ENCODE measurements at regions of chr6 and their contacts with region 1.

Region 1: GRCh38 chr6:28136585-28137504 is 4.8 kb upstream of the ZKSCAN8 start:
- DNase-seq: peak; percentile 45 to 72 (median 56)
- ATAC-seq: peak; percentile 56
- H3K4me3 ChIP-seq: peak overlapping the region; percentile 89
- H3K4me3 Mint-ChIP-seq: peak overlapping the region; percentile 91 to 100 (median 94)
- H3K27ac ChIP-seq: peak overlapping the region; percentile 98
- H3K27ac Mint-ChIP-seq: peak overlapping the region; percentile 91 to 100 (median 97)
- H3K4me1 ChIP-seq: peaks cover 10 to 19% of the 10 kb centered on the region in 2 donors
- H3K4me1 Mint-ChIP-seq: peaks cover 31 to 78% (median 72%) of the 10 kb centered on the region in 7 donors
- H3K27me3 ChIP-seq: no peaks in the 10 kb centered on the region
- H3K27me3 Mint-ChIP-seq: no peaks in the 10 kb centered on the region

Region 2: GRCh38 chr6:27902335-27903314 is 234.2 kb before region 1 on chr6:
- CTCF ChIA-PET with region 1: no interaction called
- POLR2A ChIA-PET with region 1: no interaction called
- intact Hi-C with region 1: loop called (anchors 5 kb)
- DNase-seq: peak; percentile 75 to 94 (median 90)
- ATAC-seq: peak; percentile 92
- H3K4me3 ChIP-seq: peak overlapping the region; percentile 95
- H3K4me3 Mint-ChIP-seq: peak overlapping the region; percentile 75 to 97 (median 91)
- H3K27ac ChIP-seq: peak overlapping the region; percentile 82
- H3K27ac Mint-ChIP-seq: peak overlapping the region; percentile 95 to 99 (median 99)
- H3K4me1 ChIP-seq: peaks cover 0 to 3% of the 10 kb centered on the region in 2 donors
- H3K4me1 Mint-ChIP-seq: peaks cover 0 to 26% (median 15%) of the 10 kb centered on the region in 7 donors
- H3K27me3 ChIP-seq: no peaks in the 10 kb centered on the region
- H3K27me3 Mint-ChIP-seq: peaks cover 4 to 35% (median 13%) of the 10 kb centered on the region in 5 donors

Region 3: GRCh38 chr6:28152531-28152930 is 15.7 kb after region 1 on chr6:
- CTCF ChIA-PET with region 1: interaction called, 4 read pairs
- POLR2A ChIA-PET with region 1: interaction called, 10 read pairs
- intact Hi-C with region 1: no loop called
- DNase-seq: no peak
- ATAC-seq: no peak
- H3K4me3 ChIP-seq: no peak overlapping the region
- H3K4me3 Mint-ChIP-seq: no peak overlapping the region
- H3K27ac ChIP-seq: no peak overlapping the region
- H3K27ac Mint-ChIP-seq: no peak overlapping the region
- H3K4me1 ChIP-seq: no peaks in the 10 kb centered on the region
- H3K4me1 Mint-ChIP-seq: peaks cover 2 to 7% (median 5%) of the 10 kb centered on the region in 7 donors
- H3K27me3 ChIP-seq: no peaks in the 10 kb centered on the region
- H3K27me3 Mint-ChIP-seq: no peaks in the 10 kb centered on the region

Region 4: DNA sequence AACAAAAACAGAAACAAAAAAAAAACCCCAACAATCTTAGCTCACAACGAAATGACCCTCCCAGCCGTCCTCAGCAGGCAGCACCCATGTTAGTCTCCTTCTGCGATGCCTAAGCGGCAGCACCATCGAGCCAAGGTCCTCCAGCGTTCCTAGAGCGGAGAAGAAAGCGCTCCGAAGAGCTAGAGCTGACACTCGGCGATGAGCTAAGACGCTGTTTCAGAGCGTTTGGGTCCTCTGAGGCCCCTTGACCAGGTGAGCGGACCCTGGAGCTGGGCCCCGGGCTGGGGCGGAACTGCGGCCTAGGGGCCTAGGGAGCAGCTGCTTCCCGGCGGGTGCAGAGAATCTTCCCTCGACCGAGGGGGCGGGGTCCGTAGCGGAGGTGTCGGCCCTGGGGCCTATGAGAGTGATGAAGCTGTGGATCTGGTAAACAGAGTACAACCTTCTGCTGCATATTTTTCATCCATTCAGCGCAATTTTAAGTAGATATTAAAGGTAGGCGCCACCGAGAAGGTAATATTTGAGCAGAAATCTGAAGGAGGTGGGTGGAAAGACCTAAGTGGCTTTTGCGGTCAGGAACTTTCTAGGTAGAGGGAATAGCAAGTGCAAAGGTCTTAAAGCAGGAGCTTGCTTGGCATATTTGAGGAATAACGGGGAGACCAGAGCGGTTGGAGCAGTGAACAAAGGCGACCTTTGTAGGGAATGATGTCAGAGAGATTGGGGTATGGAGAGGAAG is 130.3 kb after region 1 on chr6 and contains the start of gene ZSCAN26:
- CTCF ChIA-PET with region 1: interaction called, 4 read pairs
- POLR2A ChIA-PET with region 1: interaction called, 22 read pairs
- intact Hi-C with region 1: loop called (anchors 1 to 2 kb)
- DNase-seq: peak; percentile 67 to 91 (median 87)
- ATAC-seq: peak; percentile 96
- H3K4me3 ChIP-seq: peak within 1 kb of the TSS; percentile 96
- H3K4me3 Mint-ChIP-seq: peak within 1 kb of the TSS in 1 of 10 donors; percentile 30
- H3K27ac ChIP-seq: peak within 1 kb of the TSS; percentile 91
- H3K27ac Mint-ChIP-seq: peak within 1 kb of the TSS in 1 of 9 donors; percentile 48
- H3K4me1 ChIP-seq: peaks cover 0 to 24% of the 10 kb centered on the region in 2 donors
- H3K4me1 Mint-ChIP-seq: peaks cover 6 to 37% (median 24%) of the 10 kb centered on the region in 7 donors
- H3K27me3 ChIP-seq: no peaks in the 10 kb centered on the region
- H3K27me3 Mint-ChIP-seq: peaks cover 0 to 7% (median 0%) of the 10 kb centered on the region in 5 donors
- total RNA-seq, gene ZSCAN26: 8.0 to 27.8 (median 12.5) TPM

Region 5: GRCh38 chr6:28355743-28356665 is 219.2 kb after region 1 on chr6:
- CTCF ChIA-PET with region 1: interaction called, 5 read pairs
- POLR2A ChIA-PET with region 1: interaction called, 7 read pairs
- intact Hi-C with region 1: loop called (anchors 1 kb)
- DNase-seq: peak; percentile 26 to 69 (median 54)
- ATAC-seq: peak; percentile 92
- H3K4me3 ChIP-seq: peak overlapping the region; percentile 69
- H3K4me3 Mint-ChIP-seq: peak overlapping the region; percentile 78 to 96 (median 92)
- H3K27ac ChIP-seq: no peak overlapping the region
- H3K27ac Mint-ChIP-seq: peak overlapping the region; percentile 21 to 89 (median 62)
- H3K4me1 ChIP-seq: peaks cover 0 to 7% of the 10 kb centered on the region in 2 donors
- H3K4me1 Mint-ChIP-seq: peaks cover 16 to 38% (median 34%) of the 10 kb centered on the region in 7 donors
- H3K27me3 ChIP-seq: no peaks in the 10 kb centered on the region
- H3K27me3 Mint-ChIP-seq: no peaks in the 10 kb centered on the region

Region 6: DNA sequence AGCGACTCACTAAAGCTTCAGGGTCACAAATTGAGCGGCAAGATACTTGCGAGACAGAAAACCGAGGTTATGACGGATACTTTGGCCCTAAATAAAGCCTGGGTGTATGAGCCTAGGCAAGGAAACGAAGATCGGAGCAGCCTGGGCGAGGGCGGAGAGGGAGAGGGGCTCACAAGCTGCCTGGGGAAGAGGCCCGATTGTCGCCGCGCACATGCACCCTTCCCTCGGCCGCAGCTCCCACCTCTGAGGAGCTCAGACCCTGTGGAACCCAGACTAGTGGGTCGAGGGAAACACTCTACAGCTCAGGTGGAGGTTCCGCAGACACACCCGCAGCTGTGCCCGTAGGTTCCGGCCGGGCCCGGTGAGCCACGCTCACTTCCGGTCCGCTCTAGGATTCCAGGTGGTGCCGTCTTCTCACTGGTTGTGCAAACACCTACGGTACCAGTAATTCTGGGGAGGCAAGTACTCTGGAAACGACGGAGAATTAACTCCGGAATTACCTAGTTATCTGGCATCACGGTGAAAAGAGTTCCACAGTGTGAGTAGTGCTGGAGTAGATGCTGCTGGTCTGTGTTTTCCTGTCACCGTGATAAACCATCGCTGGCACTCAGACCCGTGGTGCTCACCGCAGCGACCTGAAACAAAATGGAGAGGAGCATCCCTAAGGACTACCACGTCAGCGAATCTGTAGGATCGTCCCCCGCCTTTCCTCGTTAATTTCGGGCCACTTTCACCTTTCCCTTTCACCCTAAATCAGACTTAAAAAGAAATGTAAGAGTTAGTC is 450.3 kb after region 1 on chr6:
- CTCF ChIA-PET with region 1: no interaction called
- POLR2A ChIA-PET with region 1: interaction called, 4 read pairs
- intact Hi-C with region 1: loop called (anchors 10 kb)
- DNase-seq: peak; percentile 29 to 70 (median 60)
- ATAC-seq: peak; percentile 77
- H3K4me3 ChIP-seq: peak overlapping the region; percentile 54
- H3K4me3 Mint-ChIP-seq: peak overlapping the region; percentile 82 to 90 (median 88)
- H3K27ac ChIP-seq: no peak overlapping the region
- H3K27ac Mint-ChIP-seq: peak overlapping the region in 8 of 9 donors; percentile 5 to 88 (median 60)
- H3K4me1 ChIP-seq: peaks cover 0 to 9% of the 10 kb centered on the region in 2 donors
- H3K4me1 Mint-ChIP-seq: peaks cover 11 to 43% (median 34%) of the 10 kb centered on the region in 7 donors
- H3K27me3 ChIP-seq: peaks cover 10 to 28% of the 10 kb centered on the region in 2 donors
- H3K27me3 Mint-ChIP-seq: peaks cover 57 to 85% (median 76%) of the 10 kb centered on the region in 5 donors